Heart right ventricle (tissue), 16 donors: ENCODE measurements at regions of chr19 and their contacts with region 1.

Region 1: DNA sequence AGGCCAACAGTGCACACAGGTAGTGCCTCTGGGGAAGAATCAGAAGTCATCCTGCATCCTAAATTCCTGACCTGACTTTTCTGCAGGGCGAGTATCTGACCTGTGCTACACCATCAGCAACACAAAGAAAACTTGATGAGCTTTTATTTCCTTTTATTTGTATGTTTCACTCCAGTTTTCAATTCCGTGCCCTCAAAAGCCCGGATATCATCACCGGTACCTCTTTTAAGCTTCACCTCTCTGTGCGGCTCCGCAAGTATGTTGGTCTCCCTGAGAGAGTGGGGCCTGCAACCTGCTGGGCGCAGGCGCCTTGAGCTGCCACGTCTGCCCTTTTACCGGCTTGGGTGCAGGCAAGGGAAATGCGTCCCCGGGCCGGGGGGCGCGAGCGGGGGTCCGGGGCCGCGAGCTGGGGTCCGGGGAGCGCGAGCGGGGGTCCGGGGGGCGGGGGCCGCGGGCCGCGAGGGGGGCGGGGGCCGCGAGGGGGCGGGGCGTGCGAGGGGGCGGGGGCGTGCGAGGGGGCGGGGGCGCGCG is 4.3 kb upstream of the DUXA start:
- DNase-seq: peak; percentile 37 to 58
- ATAC-seq: peak; percentile 31 to 85 (median 72)
- H3K4me3 ChIP-seq: peak overlapping the region in 9 of 10 donors; percentile 21 to 57 (median 36)
- H3K27ac ChIP-seq: peak overlapping the region in 8 of 10 donors; percentile 34 to 61 (median 50)
- H3K4me1 ChIP-seq: peaks cover 0 to 17% (median 7%) of the 10 kb centered on the region in 9 donors
- H3K27me3 ChIP-seq: no peaks in the 10 kb centered on the region
- CTCF ChIP-seq: no peak

Region 2: DNA sequence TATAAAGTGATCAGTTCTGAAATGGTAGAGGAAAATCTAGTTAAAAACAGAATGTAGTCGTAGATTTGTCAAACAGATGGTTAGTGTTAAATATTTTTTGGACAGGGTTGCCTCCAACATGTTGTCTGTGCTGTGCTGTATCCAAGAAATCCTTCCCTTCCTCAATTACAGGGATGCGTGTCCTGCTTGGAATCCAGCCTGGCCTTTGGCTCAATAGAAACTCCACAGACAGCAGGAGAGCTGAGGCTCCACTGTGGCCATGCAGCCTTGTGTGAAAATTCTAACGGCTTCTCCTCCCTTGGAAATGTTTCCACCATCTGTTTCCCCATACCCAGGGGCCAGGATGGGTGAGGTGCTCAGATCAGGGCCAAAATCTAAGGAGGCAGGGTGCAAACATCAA is 119.5 kb before region 1 on chr19:
- intact Hi-C with region 1: no loop called
- DNase-seq: no peak
- ATAC-seq: peak in 1 of 8 donors; percentile 33
- H3K4me3 ChIP-seq: no peak overlapping the region
- H3K27ac ChIP-seq: no peak overlapping the region
- H3K4me1 ChIP-seq: no peaks in the 10 kb centered on the region
- H3K27me3 ChIP-seq: peaks cover 0 to 15% (median 4%) of the 10 kb centered on the region in 7 donors
- CTCF ChIP-seq: no peak

Region 3: GRCh38 chr19:57191141-57192076 is 19.8 kb after region 1 on chr19 and contains the start of gene ZNF264:
- intact Hi-C with region 1: loop called in 1 of 10 experiments (anchors 2 kb)
- DNase-seq: peak; percentile 94 to 95
- ATAC-seq: peak; percentile 98 to 100 (median 99)
- H3K4me3 ChIP-seq: peak within 1 kb of the TSS; percentile 85 to 100 (median 98)
- H3K27ac ChIP-seq: peak within 1 kb of the TSS; percentile 52 to 97 (median 92)
- H3K4me1 ChIP-seq: peaks cover 0 to 30% (median 23%) of the 10 kb centered on the region in 9 donors
- H3K27me3 ChIP-seq: peaks cover 0 to 8% (median 0%) of the 10 kb centered on the region in 7 donors
- CTCF ChIP-seq: peak in 2 of 9 donors; percentile 12 to 18
- total RNA-seq, gene ZNF264: 16.5 to 23.8 (median 20.7) TPM